ENCODE measurements at regions of chr4 and their contacts with region 1.

Region 1: GRCh38 chr4:83284193-83285054 is at the start of gene COQ2:
- DNase-seq: peak; percentile 89
- H3K4me3 ChIP-seq: peak within 1 kb of the TSS; percentile 62 to 81 (median 73)
- H3K27ac ChIP-seq: peak within 1 kb of the TSS; percentile 74
- H3K4me1 ChIP-seq: peaks cover 21% of the 10 kb centered on the region
- H3K27me3 ChIP-seq: no peaks in the 10 kb centered on the region
- CTCF ChIP-seq: peak in 1 of 2 donors; percentile 29
- total RNA-seq, gene COQ2: 9.3 to 20.4 TPM

Region 2: DNA sequence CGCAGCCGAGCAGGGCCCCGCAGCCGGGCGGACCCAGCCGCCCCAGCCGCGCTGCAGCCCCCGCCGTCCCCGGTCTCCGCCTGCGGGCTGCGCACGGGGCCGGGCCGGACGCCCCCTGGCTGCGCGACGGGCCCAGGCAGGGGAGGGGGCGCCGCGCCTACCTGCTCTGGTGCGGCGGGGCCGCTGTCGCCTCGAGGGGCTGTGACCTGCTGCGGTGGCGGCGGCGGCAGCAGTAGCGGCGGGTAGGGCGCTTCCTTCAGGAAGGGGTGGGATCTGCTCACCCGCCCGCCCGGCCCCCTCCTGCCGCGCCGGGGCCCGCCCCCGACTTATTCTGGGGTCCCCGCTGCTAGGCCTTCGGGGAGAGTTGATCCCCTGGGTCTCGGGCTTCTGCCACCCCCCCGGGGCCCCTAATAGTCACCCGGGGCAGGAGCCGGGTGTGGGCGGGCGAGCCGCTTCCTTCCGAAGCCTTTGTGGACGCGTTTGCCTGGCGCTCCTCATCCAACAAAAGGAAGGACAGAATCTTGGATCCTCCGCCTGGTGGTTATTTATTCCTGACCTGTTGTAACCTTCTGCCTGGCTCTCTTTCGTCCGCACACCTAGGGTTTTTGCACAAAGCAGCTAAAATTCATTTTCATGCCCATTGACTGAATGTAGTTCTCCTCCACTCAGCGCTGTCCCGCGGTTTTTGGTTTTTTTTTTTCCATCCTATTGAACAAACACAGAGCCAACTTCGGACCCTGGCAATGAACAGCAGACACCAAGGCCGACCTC is 722.5 kb before region 1 on chr4 and contains the start of gene TMEM150C:
- CTCF ChIA-PET with region 1: no interaction called
- dilution Hi-C with region 1: no loop called
- in situ Hi-C with region 1: no loop called
- intact Hi-C with region 1: loop called (anchors 10 kb)
- DNase-seq: no peak
- H3K4me3 ChIP-seq: peak within 1 kb of the TSS; percentile 45 to 64 (median 64)
- H3K27ac ChIP-seq: no peak within 1 kb of the TSS
- H3K4me1 ChIP-seq: no peaks in the 10 kb centered on the region
- H3K27me3 ChIP-seq: peaks cover 12% of the 10 kb centered on the region
- CTCF ChIP-seq: no peak
- total RNA-seq, gene TMEM150C: 0.59 to 1.5 TPM

Region 3: DNA sequence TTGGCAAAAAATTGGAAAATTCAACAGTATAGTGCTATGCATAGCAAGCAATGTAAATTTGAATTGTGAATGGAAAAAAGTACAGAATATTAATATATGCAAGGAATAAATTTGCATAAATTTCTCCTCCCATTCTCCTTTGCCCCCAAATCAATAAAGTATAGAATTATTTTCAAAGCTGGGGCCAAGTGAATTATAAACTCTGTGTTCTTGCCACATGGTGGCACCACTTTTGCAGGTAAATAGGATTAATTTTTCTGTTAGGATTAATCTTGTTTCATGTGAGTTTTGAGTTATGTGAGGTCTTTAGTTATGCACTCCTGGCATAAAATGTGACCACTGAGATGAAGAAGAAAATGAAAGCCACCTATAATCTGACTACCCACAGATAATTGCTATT is 229.5 kb before region 1 on chr4:
- CTCF ChIA-PET with region 1: no interaction called
- dilution Hi-C with region 1: no loop called
- in situ Hi-C with region 1: no loop called
- intact Hi-C with region 1: loop called (anchors 1 kb)
- DNase-seq: no peak
- H3K4me3 ChIP-seq: no peak overlapping the region
- H3K27ac ChIP-seq: no peak overlapping the region
- H3K4me1 ChIP-seq: no peaks in the 10 kb centered on the region
- H3K27me3 ChIP-seq: no peaks in the 10 kb centered on the region
- CTCF ChIP-seq: peak; percentile 29 to 38

Region 4: GRCh38 chr4:83316459-83317165 is 32.2 kb after region 1 on chr4:
- CTCF ChIA-PET with region 1: no interaction called
- dilution Hi-C with region 1: no loop called
- in situ Hi-C with region 1: no loop called
- intact Hi-C with region 1: loop called (anchors 2 kb)
- DNase-seq: peak; percentile 93
- H3K4me3 ChIP-seq: no peak overlapping the region
- H3K27ac ChIP-seq: peak overlapping the region; percentile 41
- H3K4me1 ChIP-seq: peaks cover 7% of the 10 kb centered on the region
- H3K27me3 ChIP-seq: no peaks in the 10 kb centered on the region
- CTCF ChIP-seq: no peak

Region 5: GRCh38 chr4:83413676-83414075 is 129.3 kb after region 1 on chr4:
- CTCF ChIA-PET with region 1: interaction called, 7 read pairs
- dilution Hi-C with region 1: no loop called
- in situ Hi-C with region 1: no loop called
- intact Hi-C with region 1: loop called (anchors 10 kb)
- DNase-seq: peak; percentile 6
- H3K4me3 ChIP-seq: no peak overlapping the region
- H3K27ac ChIP-seq: no peak overlapping the region
- H3K4me1 ChIP-seq: no peaks in the 10 kb centered on the region
- H3K27me3 ChIP-seq: no peaks in the 10 kb centered on the region
- CTCF ChIP-seq: no peak

Region 6: DNA sequence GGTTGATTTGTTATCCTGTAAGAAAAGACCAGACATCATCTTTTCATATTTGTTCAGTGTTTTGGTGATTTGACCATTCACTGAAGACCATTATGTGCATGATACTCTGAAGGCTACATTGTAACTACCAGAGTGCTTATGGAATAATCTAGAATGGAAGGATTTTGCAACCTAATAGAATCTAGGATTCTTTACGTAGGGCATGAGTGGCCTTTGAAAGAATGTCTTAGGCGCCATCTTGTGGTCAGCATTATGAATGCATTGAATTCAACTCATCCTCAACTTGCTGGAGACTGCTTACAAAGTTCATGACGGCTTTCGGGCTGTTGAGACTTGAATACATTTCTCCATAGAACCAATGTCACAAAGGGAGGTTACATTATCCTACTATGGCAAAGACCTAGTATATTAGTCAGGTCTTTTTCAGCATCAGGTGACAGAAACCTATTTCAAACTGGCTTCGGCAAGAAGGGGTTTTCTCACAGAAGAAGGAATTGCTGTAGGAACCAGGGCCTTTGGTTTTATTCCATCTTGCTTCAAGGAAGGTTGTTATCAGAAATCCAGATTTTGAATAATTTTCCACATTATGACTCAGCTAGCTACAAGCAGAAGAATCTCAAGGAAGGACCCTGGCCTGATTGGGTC is 355.5 kb after region 1 on chr4:
- CTCF ChIA-PET with region 1: no interaction called
- dilution Hi-C with region 1: no loop called
- in situ Hi-C with region 1: no loop called
- intact Hi-C with region 1: loop called (anchors 10 kb)
- DNase-seq: peak; percentile 64
- H3K4me3 ChIP-seq: no peak overlapping the region
- H3K27ac ChIP-seq: no peak overlapping the region
- H3K4me1 ChIP-seq: no peaks in the 10 kb centered on the region
- H3K27me3 ChIP-seq: no peaks in the 10 kb centered on the region
- CTCF ChIP-seq: peak; percentile 77 to 81